CD8-positive, alpha-beta T cell (primary cell): ENCODE measurements at regions of chr7 and their contacts with region 1.

Region 1: DNA sequence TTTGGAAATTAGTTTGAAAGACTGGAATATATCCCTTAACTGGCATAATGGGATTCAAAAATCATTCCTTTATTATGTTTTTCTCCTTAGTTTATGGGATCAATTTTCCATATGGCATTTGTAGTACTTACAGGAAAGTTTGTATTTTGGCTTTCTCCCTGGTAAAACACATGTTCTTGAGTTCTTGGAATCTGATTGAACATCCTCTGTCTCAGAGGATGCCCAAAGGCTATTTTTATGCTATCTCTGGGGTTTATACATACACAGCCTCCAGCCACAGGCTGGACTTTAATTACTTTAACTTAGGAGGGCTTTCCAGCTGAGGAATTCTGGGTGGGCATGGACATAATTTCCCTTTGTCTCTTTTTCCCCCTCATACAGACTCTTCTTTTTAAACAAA is 236.4 kb downstream of the HGF start:
- DNase-seq: no peak
- ATAC-seq: no peak
- H3K4me3 ChIP-seq: no peak overlapping the region
- H3K4me3 Mint-ChIP-seq: no peak overlapping the region
- H3K27ac ChIP-seq: no peak overlapping the region
- H3K27ac Mint-ChIP-seq: no peak overlapping the region
- H3K4me1 ChIP-seq: no peaks in the 10 kb centered on the region
- H3K4me1 Mint-ChIP-seq: no peaks in the 10 kb centered on the region
- H3K27me3 ChIP-seq: no peaks in the 10 kb centered on the region
- H3K27me3 Mint-ChIP-seq: no peaks in the 10 kb centered on the region
- CTCF ChIP-seq: no peak

Region 2: GRCh38 chr7:81583882-81584533 is 50.6 kb after region 1 on chr7:
- CTCF ChIA-PET with region 1: no interaction called
- POLR2A ChIA-PET with region 1: no interaction called
- intact Hi-C with region 1: loop called in 1 of 2 experiments (anchors 2 kb)
- DNase-seq: no peak
- ATAC-seq: no peak
- H3K4me3 ChIP-seq: no peak overlapping the region
- H3K4me3 Mint-ChIP-seq: no peak overlapping the region
- H3K27ac ChIP-seq: no peak overlapping the region
- H3K27ac Mint-ChIP-seq: no peak overlapping the region
- H3K4me1 ChIP-seq: no peaks in the 10 kb centered on the region
- H3K4me1 Mint-ChIP-seq: no peaks in the 10 kb centered on the region
- H3K27me3 ChIP-seq: no peaks in the 10 kb centered on the region
- H3K27me3 Mint-ChIP-seq: no peaks in the 10 kb centered on the region
- CTCF ChIP-seq: no peak

Region 3: GRCh38 chr7:81744389-81744788 is 211.0 kb after region 1 on chr7:
- CTCF ChIA-PET with region 1: no interaction called
- POLR2A ChIA-PET with region 1: no interaction called
- intact Hi-C with region 1: no loop called
- DNase-seq: no peak
- ATAC-seq: no peak
- H3K4me3 ChIP-seq: no peak overlapping the region
- H3K4me3 Mint-ChIP-seq: no peak overlapping the region
- H3K27ac ChIP-seq: no peak overlapping the region
- H3K27ac Mint-ChIP-seq: no peak overlapping the region
- H3K4me1 ChIP-seq: no peaks in the 10 kb centered on the region
- H3K4me1 Mint-ChIP-seq: no peaks in the 10 kb centered on the region
- H3K27me3 ChIP-seq: no peaks in the 10 kb centered on the region
- H3K27me3 Mint-ChIP-seq: no peaks in the 10 kb centered on the region
- CTCF ChIP-seq: no peak